ENCODE measurements at regions of chr16 and their contacts with region 1.

Region 1: GRCh38 chr16:87950765-87951549 is at the start of gene BANP:
- DNase-seq: peak; percentile 95
- ATAC-seq: peak; percentile 93
- H3K4me3 Mint-ChIP-seq: peak within 1 kb of the TSS; percentile 97
- H3K27ac Mint-ChIP-seq: peak within 1 kb of the TSS; percentile 100
- H3K4me1 Mint-ChIP-seq: peaks cover 69% of the 10 kb centered on the region
- H3K27me3 Mint-ChIP-seq: no peaks in the 10 kb centered on the region
- CTCF ChIP-seq: no peak
- total RNA-seq, gene BANP: 62.8 and 72.3 TPM in 2 replicates

Region 2: DNA sequence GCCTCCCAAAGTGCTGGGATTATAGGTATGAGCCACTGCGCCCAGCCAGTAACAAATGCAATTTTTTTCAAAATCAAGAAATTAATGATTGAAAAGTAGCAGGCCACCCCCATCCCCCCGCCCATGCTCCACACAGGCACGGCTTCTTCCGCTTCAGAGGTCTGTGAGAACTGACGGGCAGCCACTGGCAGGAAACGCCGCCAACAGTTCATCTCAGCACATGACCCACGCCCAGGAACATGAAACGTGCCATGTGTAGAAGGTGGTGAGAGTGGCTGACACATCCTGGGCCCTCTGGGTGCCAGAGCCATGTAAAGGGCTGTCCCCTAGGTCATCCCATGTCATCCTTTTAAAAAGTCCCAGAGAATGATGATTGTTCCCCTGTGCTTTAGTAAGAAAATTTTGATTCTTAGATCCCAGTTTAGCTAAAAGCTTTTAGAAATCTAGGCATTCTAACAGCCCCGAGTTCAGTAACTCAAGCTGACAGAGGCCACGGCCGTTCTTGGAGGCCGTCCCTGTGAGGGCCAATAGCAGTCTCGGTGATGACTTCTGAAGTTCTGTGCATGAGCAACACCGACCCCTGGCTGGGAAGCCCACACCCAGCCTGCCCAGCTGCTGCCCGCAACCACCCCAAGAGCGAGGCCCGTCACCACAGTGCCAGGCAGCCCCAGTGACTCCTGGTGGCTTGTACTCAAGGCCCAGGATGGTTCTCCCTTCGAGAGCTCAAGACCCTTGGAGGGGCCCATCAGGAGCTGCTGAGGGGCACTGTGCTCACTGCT is 237.3 kb before region 1 on chr16:
- CTCF ChIA-PET with region 1: no interaction called
- POLR2A ChIA-PET with region 1: no interaction called
- intact Hi-C with region 1: no loop called
- DNase-seq: no peak
- ATAC-seq: peak; percentile 67
- H3K4me3 Mint-ChIP-seq: no peak overlapping the region
- H3K27ac Mint-ChIP-seq: no peak overlapping the region
- H3K4me1 Mint-ChIP-seq: peaks cover 10% of the 10 kb centered on the region
- H3K27me3 Mint-ChIP-seq: no peaks in the 10 kb centered on the region
- CTCF ChIP-seq: no peak

Region 3: DNA sequence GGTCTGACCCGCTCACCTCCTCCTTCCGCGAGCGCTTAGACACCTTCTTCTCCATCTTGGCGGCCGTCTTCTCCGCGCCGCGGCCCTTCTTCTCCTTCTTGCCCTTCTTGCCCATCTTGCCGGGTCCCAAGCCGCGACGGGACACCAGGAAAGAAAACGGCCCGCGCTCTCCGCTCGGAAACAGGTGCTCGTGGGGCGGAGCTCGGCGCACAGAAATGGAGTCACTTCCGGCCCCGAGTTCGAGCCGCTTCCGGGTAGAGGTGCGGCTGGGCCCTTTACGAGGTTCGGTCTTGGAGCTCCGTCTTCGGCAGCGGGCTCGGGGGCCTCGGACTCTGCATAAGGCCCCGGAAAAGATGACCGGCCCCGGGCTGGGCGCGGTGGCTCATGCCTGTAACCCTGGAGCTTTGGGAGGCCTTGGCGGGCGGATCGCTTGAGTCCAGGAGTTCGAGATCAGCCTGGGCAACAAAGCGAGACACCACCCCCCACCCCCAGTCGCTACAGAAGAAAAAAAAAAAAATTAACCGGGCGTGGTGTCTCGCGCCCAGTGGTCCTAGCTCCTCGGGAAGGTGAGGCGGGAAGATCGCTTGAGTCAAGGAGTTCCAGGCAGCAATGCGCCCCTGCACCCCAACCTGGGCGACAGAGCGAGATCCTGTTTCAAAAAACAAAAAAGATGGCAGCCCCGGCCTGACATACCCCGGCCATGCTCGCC is 185.0 kb before region 1 on chr16 and contains the start of gene KLHDC4:
- CTCF ChIA-PET with region 1: no interaction called
- POLR2A ChIA-PET with region 1: interaction called, 10 read pairs
- intact Hi-C with region 1: loop called (anchors 1 kb)
- DNase-seq: peak; percentile 87
- ATAC-seq: peak; percentile 84
- H3K4me3 Mint-ChIP-seq: peak within 1 kb of the TSS; percentile 100
- H3K27ac Mint-ChIP-seq: peak within 1 kb of the TSS; percentile 98
- H3K4me1 Mint-ChIP-seq: peaks cover 31% of the 10 kb centered on the region
- H3K27me3 Mint-ChIP-seq: no peaks in the 10 kb centered on the region
- CTCF ChIP-seq: no peak
- total RNA-seq, gene KLHDC4: 70.1 and 87.0 TPM in 2 replicates

Region 4: DNA sequence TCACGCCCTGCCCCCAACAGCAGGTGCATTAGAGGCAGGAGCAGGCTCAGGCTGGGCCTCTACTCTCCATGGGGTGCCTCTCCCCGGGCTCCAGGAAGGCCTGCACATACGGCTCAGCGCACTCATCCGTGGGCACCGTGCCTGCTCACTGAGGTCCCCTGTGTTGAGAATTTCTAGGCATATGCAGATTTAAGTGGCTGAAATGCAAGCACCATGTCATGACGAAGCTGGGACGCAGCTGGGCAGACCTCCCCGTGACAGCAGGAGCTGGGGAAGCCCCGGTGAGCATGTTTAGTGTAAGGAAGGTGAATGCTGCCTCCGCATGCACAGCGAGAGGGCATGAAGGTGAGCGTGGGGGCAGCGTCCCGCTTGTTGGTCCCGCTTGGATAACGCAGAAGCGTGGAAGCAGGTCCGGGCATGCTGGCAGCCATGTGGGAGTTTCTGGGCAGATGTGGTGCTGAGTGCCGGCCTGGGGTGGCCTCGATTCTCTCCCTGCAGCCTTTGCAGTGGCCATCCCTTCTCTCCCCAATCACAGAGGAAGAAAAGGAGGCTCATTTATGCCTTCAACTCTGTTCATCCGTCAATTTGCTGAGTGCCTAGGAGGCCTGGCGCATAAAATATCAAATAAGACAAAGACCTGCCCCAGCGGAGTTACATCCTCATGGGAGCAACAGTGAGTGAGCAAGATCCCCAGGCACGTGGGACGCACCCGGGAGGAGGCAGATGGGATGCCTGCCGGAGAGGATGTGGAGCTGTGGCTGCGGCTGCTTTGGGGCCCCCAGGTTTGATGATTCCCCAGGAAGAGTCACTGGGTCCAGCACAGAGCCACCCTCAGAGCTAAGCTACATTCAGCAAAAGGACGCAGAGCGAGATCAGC is 26.3 kb before region 1 on chr16:
- CTCF ChIA-PET with region 1: interaction called, 3 read pairs
- POLR2A ChIA-PET with region 1: interaction called, 36 read pairs
- intact Hi-C with region 1: loop called (anchors 1 kb)
- DNase-seq: peak; percentile 61
- ATAC-seq: peak; percentile 81
- H3K4me3 Mint-ChIP-seq: peak overlapping the region; percentile 64
- H3K27ac Mint-ChIP-seq: peak overlapping the region; percentile 70
- H3K4me1 Mint-ChIP-seq: peaks cover 35% of the 10 kb centered on the region
- H3K27me3 Mint-ChIP-seq: peaks cover 3% of the 10 kb centered on the region
- CTCF ChIP-seq: no peak

Region 5: GRCh38 chr16:88069397-88070168 is 118.6 kb after region 1 on chr16:
- CTCF ChIA-PET with region 1: no interaction called
- POLR2A ChIA-PET with region 1: interaction called, 3 read pairs
- intact Hi-C with region 1: loop called (anchors 1 kb)
- DNase-seq: peak; percentile 79
- ATAC-seq: peak; percentile 93
- H3K4me3 Mint-ChIP-seq: peak overlapping the region; percentile 74
- H3K27ac Mint-ChIP-seq: peak overlapping the region; percentile 96
- H3K4me1 Mint-ChIP-seq: peaks cover 50% of the 10 kb centered on the region
- H3K27me3 Mint-ChIP-seq: no peaks in the 10 kb centered on the region
- CTCF ChIP-seq: no peak

Region 6: DNA sequence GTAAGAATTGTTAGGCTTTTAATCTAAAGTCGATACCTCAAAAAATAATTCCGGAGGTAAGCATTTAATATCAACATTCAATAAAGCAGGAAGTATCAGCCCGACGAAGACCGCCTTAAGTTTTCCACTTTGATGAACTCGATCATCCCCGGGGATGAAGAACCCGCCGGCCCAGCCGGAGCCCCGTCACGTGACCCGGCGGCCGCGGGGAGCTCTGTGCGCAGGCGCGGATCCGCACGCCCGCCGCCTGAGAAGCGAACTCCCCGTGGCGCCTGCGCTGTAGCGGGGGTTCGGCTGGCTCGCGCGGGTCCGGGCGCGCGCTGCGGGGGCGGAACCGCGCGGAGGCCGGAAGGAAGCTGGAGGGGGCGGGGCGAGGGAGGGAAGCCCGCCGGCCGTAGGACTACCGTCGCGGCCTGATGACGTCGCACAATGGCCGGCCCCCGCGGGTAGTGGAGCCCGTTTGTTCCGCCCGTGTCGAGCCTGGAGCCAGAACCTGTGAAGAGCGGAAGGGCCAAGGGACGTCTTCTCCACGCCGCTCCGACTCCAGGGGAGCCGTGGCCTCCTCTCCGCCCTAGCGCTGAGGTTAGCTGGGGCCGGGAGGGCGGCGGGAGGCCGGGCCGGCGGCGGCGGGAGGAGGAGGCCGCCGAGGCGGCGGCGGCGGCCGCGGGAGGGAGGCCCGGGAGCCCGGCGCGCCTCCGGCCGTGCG is 619.2 kb after region 1 on chr16 and contains the start of gene ZC3H18:
- CTCF ChIA-PET with region 1: no interaction called
- POLR2A ChIA-PET with region 1: interaction called, 13 read pairs
- intact Hi-C with region 1: loop called (anchors 1 kb)
- DNase-seq: peak; percentile 99
- ATAC-seq: peak; percentile 92
- H3K4me3 Mint-ChIP-seq: peak within 1 kb of the TSS; percentile 86
- H3K27ac Mint-ChIP-seq: peak within 1 kb of the TSS; percentile 76
- H3K4me1 Mint-ChIP-seq: peaks cover 25% of the 10 kb centered on the region
- H3K27me3 Mint-ChIP-seq: no peaks in the 10 kb centered on the region
- CTCF ChIP-seq: no peak
- total RNA-seq, gene ZC3H18: 61.7 and 74.2 TPM in 2 replicates

Measured in activated B cell treated with CpG ODN at 0.5 μM for 24 hours (primary cell).